ENCODE measurements at regions of chr2 and their contacts with region 1.

Region 1: DNA sequence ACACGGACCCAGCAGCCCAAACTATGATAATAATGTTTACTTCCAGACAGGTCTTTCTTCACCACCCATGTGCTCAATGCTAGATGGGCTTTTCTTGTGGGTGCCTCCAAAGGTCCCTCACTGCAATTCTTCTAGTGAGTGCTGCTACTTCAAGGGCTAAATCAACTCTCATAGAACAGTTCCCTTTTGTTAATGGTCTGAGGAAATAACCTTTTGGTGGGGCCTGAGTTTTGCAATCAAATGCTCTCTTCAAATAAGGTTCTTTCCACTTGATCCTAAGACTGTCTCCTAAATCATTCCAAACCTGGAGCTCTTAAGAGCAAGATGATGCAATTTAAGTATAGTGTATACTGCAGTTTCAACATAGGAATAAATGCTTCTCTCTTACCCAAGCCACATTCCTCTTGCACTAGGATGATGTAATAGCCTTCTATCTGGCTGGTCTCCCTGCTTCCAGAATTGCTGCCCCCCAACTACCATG is 6.0 kb downstream of the NEMP2 start:
- DNase-seq: no peak
- ATAC-seq: peak; percentile 44
- H3K4me3 ChIP-seq: no peak overlapping the region
- H3K27ac ChIP-seq: no peak overlapping the region
- H3K4me1 ChIP-seq: peaks cover 35% of the 10 kb centered on the region
- H3K27me3 ChIP-seq: no peaks in the 10 kb centered on the region
- CTCF ChIP-seq: no peak

Region 2: DNA sequence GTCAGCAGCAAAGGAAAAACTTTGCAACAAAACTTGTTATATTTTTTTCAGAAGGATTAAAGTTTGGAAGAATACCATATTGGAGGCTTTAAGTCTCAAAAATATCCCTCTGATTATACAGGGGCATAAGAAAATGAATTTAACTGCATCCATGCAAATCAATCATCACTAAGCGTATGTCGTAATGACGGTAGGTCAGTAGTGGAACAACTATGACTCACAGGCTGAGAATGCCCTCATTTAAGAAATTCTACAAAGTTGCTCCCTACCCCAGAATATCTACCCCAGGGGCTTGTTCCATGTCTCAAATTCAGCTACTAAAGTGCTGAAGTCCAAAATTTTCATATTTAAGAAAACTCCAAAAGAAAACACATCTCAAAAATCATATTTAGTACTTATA is 107.8 kb after region 1 on chr2:
- intact Hi-C with region 1: loop called (anchors 10 kb)
- DNase-seq: no peak
- ATAC-seq: no peak
- H3K4me3 ChIP-seq: no peak overlapping the region
- H3K27ac ChIP-seq: peak overlapping the region; percentile 44
- H3K4me1 ChIP-seq: peaks cover 17% of the 10 kb centered on the region
- H3K27me3 ChIP-seq: no peaks in the 10 kb centered on the region
- CTCF ChIP-seq: no peak

Measured in upper lobe of right lung (tissue), 1 donor.